ENCODE measurements at regions of chr13 and their contacts with region 1.

Region 1: GRCh38 chr13:35157143-35157755 is 215.2 kb downstream of the NBEA start:
- DNase-seq: peak; percentile 38
- CTCF ChIP-seq: peak; percentile 50

Region 2: GRCh38 chr13:33542283-33543088 is 1614.8 kb before region 1 on chr13:
- in situ Hi-C with region 1: loop called (anchors 25 kb)
- DNase-seq: peak; percentile 89
- CTCF ChIP-seq: peak; percentile 88

Region 3: GRCh38 chr13:33931397-33932311 is 1225.6 kb before region 1 on chr13:
- in situ Hi-C with region 1: loop called (anchors 25 kb)
- DNase-seq: peak; percentile 14
- CTCF ChIP-seq: peak; percentile 49

Measured in GM13977 (cell line).